CD8-positive, alpha-beta memory T cell (primary cell): ENCODE measurements at regions of chr1 and their contacts with region 1.

Region 1: GRCh38 chr1:32521165-32521564 is 18.1 kb upstream of the ZBTB8A start:
- DNase-seq: no peak
- H3K4me3 ChIP-seq: no peak overlapping the region
- H3K4me3 Mint-ChIP-seq: peak overlapping the region in 6 of 7 donors; percentile 71 to 89 (median 78)
- H3K27ac ChIP-seq: no peak overlapping the region
- H3K27ac Mint-ChIP-seq: peak overlapping the region in 2 of 8 donors; percentile 35 to 74
- H3K4me1 ChIP-seq: no peaks in the 10 kb centered on the region
- H3K4me1 Mint-ChIP-seq: peaks cover 3 to 6% (median 4%) of the 10 kb centered on the region in 3 donors
- H3K27me3 ChIP-seq: no peaks in the 10 kb centered on the region
- H3K27me3 Mint-ChIP-seq: peaks cover 4 to 17% of the 10 kb centered on the region in 2 donors

Region 2: DNA sequence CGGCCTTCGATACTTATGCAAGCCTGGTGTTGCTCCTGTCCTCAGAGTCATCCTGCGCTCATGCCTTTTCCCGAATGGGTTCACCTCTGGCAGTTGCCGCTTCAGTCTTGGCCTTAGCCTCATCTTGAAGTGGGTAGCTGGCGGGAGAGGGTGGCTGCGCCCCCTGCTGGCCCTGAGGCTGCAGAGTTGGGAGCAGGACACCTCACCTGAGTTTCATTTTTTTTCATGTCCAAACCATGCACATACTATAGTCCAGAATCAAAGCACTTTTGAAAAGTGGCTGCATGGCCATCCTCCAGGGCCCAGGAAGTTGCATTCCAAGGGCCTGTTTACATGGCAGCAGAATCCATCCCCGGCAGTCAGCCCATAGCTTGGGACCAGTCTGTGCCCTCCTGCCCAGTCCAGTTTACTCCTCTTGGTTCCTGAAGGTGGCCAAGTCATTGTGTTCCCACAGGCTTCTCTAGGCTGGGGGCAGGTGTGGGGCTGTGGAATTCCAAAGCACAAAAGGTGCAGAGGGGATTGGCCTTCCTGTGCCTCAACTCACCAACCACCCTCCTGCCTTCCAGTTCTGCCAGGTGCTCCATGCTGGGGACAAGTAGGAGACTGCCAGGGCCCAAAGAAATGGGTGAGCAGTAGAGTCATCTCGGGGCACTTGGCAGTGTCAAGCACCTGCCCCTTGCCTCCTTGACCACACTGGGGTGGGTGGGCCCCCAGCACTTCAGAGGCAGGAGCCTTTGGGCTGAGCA is 252.0 kb after region 1 on chr1:
- CTCF ChIA-PET with region 1: interaction called, 28 read pairs
- POLR2A ChIA-PET with region 1: no interaction called
- DNase-seq: peak; percentile 54 to 81 (median 61)
- H3K4me3 ChIP-seq: no peak overlapping the region
- H3K4me3 Mint-ChIP-seq: no peak overlapping the region
- H3K27ac ChIP-seq: no peak overlapping the region
- H3K27ac Mint-ChIP-seq: peak overlapping the region in 6 of 8 donors; percentile 21 to 67 (median 53)
- H3K4me1 ChIP-seq: peaks cover 4% of the 10 kb centered on the region
- H3K4me1 Mint-ChIP-seq: peaks cover 14 to 23% (median 17%) of the 10 kb centered on the region in 3 donors
- H3K27me3 ChIP-seq: no peaks in the 10 kb centered on the region
- H3K27me3 Mint-ChIP-seq: no peaks in the 10 kb centered on the region

Region 3: DNA sequence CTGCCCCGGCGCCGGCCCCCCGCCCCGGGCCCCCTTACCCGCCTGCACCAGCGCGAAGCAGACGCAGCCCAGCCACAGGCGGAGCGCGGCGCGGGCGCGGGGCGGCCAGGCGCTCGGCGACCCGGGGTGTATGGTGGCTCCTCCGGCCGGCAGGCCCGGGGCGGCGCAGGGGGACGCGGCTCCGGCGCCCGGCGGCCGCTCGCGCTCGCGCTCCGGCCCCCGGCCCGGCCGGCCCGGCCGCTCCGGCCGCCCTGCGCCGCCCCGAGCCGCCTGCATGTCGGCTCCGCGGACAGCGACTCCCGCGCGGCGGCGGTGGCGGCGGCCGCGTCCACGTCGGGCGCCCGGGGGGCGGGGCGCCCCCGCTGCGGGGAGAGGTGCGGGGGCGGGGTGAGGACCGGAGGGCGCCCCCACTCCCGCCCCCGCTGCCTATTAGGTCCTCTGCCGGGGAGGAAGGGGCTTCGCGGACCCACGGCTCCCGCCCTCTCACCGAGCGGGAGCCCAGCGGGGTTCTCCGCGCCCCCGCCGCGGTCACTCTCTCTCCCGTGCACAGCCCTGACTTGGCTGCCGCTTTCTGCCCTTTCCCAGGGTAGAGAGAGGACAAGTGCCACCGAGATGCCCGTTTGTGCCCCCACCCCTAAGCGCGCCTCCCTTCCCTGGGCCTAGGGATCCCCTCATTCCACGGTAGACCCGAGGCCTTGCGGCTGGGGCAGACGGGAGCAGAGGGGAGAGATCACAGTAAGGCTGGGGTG is 349.6 kb after region 1 on chr1 and contains the start of gene FNDC5:
- CTCF ChIA-PET with region 1: interaction called, 12 read pairs
- POLR2A ChIA-PET with region 1: no interaction called
- DNase-seq: no peak
- H3K4me3 ChIP-seq: peak within 1 kb of the TSS; percentile 23
- H3K4me3 Mint-ChIP-seq: peak within 1 kb of the TSS; percentile 73 to 86 (median 77)
- H3K27ac ChIP-seq: no peak within 1 kb of the TSS
- H3K27ac Mint-ChIP-seq: peak within 1 kb of the TSS in 4 of 8 donors; percentile 17 to 73 (median 30)
- H3K4me1 ChIP-seq: peaks cover 7% of the 10 kb centered on the region
- H3K4me1 Mint-ChIP-seq: peaks cover 19 to 30% (median 24%) of the 10 kb centered on the region in 3 donors
- H3K27me3 ChIP-seq: peaks cover 35% of the 10 kb centered on the region
- H3K27me3 Mint-ChIP-seq: peaks cover 42 to 58% of the 10 kb centered on the region in 2 donors
- total RNA-seq, gene FNDC5: not detected